ENCODE measurements at regions of chr11 and their contacts with region 1.

Region 1: GRCh38 chr11:102614485-102614884 is 10.6 kb downstream of the MMP20 start:
- DNase-seq: no peak
- ATAC-seq: 0 out of 3 replicates have a peak, but pooled peaks have one; percentile 3
- H3K4me3 ChIP-seq: no peak overlapping the region
- H3K27ac ChIP-seq: no peak overlapping the region
- H3K4me1 ChIP-seq: peaks cover 18% of the 10 kb centered on the region
- H3K27me3 ChIP-seq: no peaks in the 10 kb centered on the region
- CTCF ChIP-seq: peak; percentile 18 to 55 (median 40); a peak in 5 of 6 replicates
- EP300 ChIP-seq: no peak
- POLR2A ChIP-seq: no peak
- RAD21 ChIP-seq: peak; percentile 80

Region 2: DNA sequence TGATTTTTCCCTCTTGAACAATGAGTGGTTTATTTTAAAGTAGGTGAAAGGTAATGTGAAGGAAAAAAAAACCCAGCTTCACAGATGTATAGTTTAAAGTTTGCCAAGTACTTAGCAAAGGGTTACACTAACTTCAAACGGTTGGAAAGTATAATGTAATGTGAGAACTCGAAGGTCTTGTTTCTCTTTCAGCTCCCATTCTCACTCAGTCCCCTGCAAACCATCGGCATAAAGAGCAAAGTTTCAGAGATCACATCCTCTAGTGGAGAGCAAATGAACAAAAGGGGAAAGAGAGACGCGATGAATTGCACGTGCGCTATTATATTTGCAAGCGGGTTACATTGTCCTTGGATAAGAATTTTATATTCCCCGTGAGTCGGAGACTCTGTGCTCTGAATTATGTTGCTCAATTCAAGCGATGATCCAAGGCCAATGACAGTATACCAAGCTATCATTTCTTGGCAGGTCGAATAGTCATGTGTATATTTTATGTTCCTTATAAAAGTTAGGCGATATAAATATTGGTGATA is 334.8 kb before region 1 on chr11:
- CTCF ChIA-PET with region 1: interaction called, 29 read pairs
- POLR2A ChIA-PET with region 1: interaction called, 3 read pairs
- RAD21 ChIA-PET with region 1: interaction called, 7 read pairs
- SMC1A ChIA-PET with region 1: interaction called, 20 read pairs
- in situ Hi-C with region 1: no loop called
- intact Hi-C with region 1: no loop called
- DNase-seq: peak; percentile 68
- ATAC-seq: peak; percentile 96
- H3K4me3 ChIP-seq: no peak overlapping the region
- H3K27ac ChIP-seq: no peak overlapping the region
- H3K4me1 ChIP-seq: peaks cover 4% of the 10 kb centered on the region; the same call in 1 of the 2 replicates
- H3K27me3 ChIP-seq: no peaks in the 10 kb centered on the region
- CTCF ChIP-seq: peak; percentile 16 to 30 (median 27); a peak in 3 of 6 replicates
- EP300 ChIP-seq: 0 out of 4 replicates have a peak, but pooled peaks of 1 of the 2 experiments have one; percentile 18
- POLR2A ChIP-seq: no peak
- RAD21 ChIP-seq: no peak

Region 3: GRCh38 chr11:102346748-102347461 is 267.6 kb before region 1 on chr11 and contains the start of gene BIRC2:
- CTCF ChIA-PET with region 1: interaction called, 361 read pairs
- POLR2A ChIA-PET with region 1: interaction called, 9 read pairs
- RAD21 ChIA-PET with region 1: interaction called, 308 read pairs
- SMC1A ChIA-PET with region 1: interaction called, 242 read pairs
- in situ Hi-C with region 1: loop called (anchors 5 kb)
- intact Hi-C with region 1: no loop called
- DNase-seq: peak; percentile 67
- ATAC-seq: peak; percentile 86
- H3K4me3 ChIP-seq: peak within 1 kb of the TSS; percentile 77
- H3K27ac ChIP-seq: peak within 1 kb of the TSS; percentile 96
- H3K4me1 ChIP-seq: no peaks in the 10 kb centered on the region
- H3K27me3 ChIP-seq: no peaks in the 10 kb centered on the region
- CTCF ChIP-seq: peak; percentile 71 to 90 (median 80)
- EP300 ChIP-seq: peak; percentile 65 to 78; a peak in 3 of 4 replicates
- POLR2A ChIP-seq: peak; percentile 92
- RAD21 ChIP-seq: no peak; the same call in 1 of the 2 replicates
- polyA plus RNA-seq, gene BIRC2: 13.8 to 17.8 TPM

Region 4: GRCh38 chr11:102420547-102420946 is 193.9 kb before region 1 on chr11:
- CTCF ChIA-PET with region 1: interaction called, 16 read pairs
- POLR2A ChIA-PET with region 1: no interaction called
- RAD21 ChIA-PET with region 1: interaction called, 22 read pairs
- SMC1A ChIA-PET with region 1: interaction called, 7 read pairs
- in situ Hi-C with region 1: no loop called
- intact Hi-C with region 1: no loop called
- DNase-seq: peak; percentile 40
- ATAC-seq: peak; percentile 83
- H3K4me3 ChIP-seq: no peak overlapping the region
- H3K27ac ChIP-seq: no peak overlapping the region
- H3K4me1 ChIP-seq: peaks cover 4% of the 10 kb centered on the region; the same call in 1 of the 2 replicates
- H3K27me3 ChIP-seq: no peaks in the 10 kb centered on the region
- CTCF ChIP-seq: no peak
- EP300 ChIP-seq: no peak
- POLR2A ChIP-seq: no peak
- RAD21 ChIP-seq: no peak

Region 5: DNA sequence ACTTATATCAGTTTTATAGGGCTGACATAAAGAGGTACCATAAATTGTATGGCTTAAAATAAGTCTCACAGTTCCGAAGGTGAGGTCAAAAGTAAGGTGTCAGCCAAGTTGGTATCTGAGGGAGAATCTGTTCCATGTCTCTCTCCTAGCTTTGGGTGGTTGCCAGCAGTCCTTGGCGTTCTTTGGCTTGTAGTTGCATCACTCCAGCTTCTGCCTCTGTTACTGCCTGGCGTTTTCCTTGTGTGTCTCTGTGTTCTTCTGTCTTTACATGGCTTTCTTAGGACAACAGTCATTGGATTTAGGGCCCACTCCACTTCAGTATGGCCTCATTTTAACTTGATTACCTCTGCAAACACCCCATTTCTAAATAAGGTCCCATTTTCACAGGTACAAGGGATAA is 100.6 kb before region 1 on chr11:
- CTCF ChIA-PET with region 1: interaction called, 22 read pairs
- POLR2A ChIA-PET with region 1: interaction called, 3 read pairs
- RAD21 ChIA-PET with region 1: interaction called, 16 read pairs
- SMC1A ChIA-PET with region 1: interaction called, 25 read pairs
- in situ Hi-C with region 1: no loop called
- intact Hi-C with region 1: no loop called
- DNase-seq: no peak
- ATAC-seq: no peak
- H3K4me3 ChIP-seq: no peak overlapping the region
- H3K27ac ChIP-seq: no peak overlapping the region
- H3K4me1 ChIP-seq: no peaks in the 10 kb centered on the region
- H3K27me3 ChIP-seq: no peaks in the 10 kb centered on the region; a peak in 1 of 4 replicates
- CTCF ChIP-seq: no peak
- EP300 ChIP-seq: no peak
- POLR2A ChIP-seq: no peak
- RAD21 ChIP-seq: no peak

Region 6: DNA sequence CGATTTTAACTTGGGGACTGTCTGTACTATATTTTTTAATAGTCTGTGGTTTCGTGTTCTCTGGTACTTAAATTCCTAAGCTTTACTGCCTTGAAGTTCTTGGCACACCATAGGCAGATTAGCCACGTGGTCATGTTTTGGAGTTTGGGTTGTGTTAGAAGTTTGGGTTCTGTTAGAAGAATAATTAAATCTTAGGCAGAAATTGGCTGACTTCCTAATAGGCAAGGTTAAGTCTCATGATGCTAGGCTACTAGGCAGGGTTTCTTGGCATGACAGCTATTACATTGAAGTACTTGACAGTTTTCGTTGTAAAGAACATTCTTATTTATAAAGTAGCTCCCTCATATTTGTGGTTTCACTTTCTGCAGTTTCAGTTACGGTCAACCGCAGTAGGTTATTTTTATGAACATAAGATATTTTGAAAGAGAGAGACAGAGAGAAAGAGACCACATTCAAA is 53.9 kb before region 1 on chr11:
- CTCF ChIA-PET with region 1: interaction called, 110 read pairs
- POLR2A ChIA-PET with region 1: interaction called, 67 read pairs
- RAD21 ChIA-PET with region 1: interaction called, 143 read pairs
- SMC1A ChIA-PET with region 1: interaction called, 399 read pairs
- in situ Hi-C with region 1: no loop called
- intact Hi-C with region 1: no loop called
- DNase-seq: peak; percentile 84
- ATAC-seq: peak; percentile 85
- H3K4me3 ChIP-seq: no peak overlapping the region; the same call in 1 of the 2 replicates
- H3K27ac ChIP-seq: peak overlapping the region; percentile 86
- H3K4me1 ChIP-seq: peaks cover 56% of the 10 kb centered on the region
- H3K27me3 ChIP-seq: no peaks in the 10 kb centered on the region
- CTCF ChIP-seq: no peak
- EP300 ChIP-seq: peak; percentile 88 to 97
- POLR2A ChIP-seq: no peak
- RAD21 ChIP-seq: peak; percentile 12; the same call in 1 of the 2 replicates